ENCODE measurements at regions of chr12 and their contacts with region 1.

Region 1: DNA sequence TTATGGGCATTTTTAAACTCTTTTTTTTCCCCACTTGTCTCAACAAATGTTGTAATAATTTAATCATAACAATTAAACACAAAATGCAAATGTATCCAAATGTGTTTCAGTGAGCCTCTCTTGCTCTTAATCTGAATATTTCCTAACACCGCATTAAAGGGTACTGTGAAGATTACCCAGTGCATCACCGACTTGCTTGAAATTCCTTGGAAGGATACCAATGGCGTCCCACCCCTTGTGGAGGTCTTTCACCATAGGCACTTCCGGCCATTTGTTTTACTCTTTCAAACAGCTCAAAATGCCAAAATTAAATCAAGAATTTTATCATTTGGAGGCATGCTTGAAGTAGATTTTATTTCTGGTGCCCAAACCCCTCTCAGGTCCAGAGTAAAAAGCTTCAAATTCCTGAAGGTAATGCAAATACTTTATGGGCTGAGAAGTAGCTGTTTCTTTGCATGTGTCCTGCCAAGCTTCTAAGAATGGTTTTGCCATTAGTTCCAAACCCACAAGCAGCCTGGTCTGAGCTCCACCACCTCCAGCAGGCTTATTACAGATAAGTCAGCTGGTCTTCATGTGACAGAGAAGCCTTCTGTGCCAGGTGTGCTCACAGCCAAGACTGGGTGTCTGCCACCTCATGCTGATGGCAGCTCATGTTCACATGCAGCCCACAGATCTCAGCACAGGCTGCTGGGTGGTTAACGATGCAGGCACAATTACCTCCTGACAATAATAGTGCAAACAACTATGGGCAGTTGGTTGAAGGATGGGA is 16.4 kb upstream of the NUDT4 start:
- DNase-seq: peak in 8 of 10 donors; percentile 25 to 93 (median 58)

Region 2: GRCh38 chr12:93174048-93174447 is 187.3 kb before region 1 on chr12:
- intact Hi-C with region 1: loop called (anchors 10 kb)
- DNase-seq: no peak

Region 3: GRCh38 chr12:93243689-93244513 is 117.4 kb before region 1 on chr12:
- intact Hi-C with region 1: no loop called
- DNase-seq: no peak

Region 4: GRCh38 chr12:93415723-93416464 is 54.6 kb after region 1 on chr12:
- intact Hi-C with region 1: no loop called
- DNase-seq: no peak

Measured in posterior cingulate gyrus (tissue), 11 donors.